Caco-2 (cell line): ENCODE measurements at regions of chr15 and their contacts with region 1.

Region 1: GRCh38 chr15:41465822-41466421 is 27.8 kb upstream of the ITPKA start:
- DNase-seq: peak in 1 of 2 experiments; percentile 57
- H3K4me3 ChIP-seq: no peak overlapping the region
- H3K4me3 Mint-ChIP-seq: no peak overlapping the region
- H3K27ac Mint-ChIP-seq: no peak overlapping the region
- H3K4me1 ChIP-seq: no peaks in the 10 kb centered on the region
- H3K4me1 Mint-ChIP-seq: no peaks in the 10 kb centered on the region
- H3K27me3 ChIP-seq: no peaks in the 10 kb centered on the region
- H3K27me3 Mint-ChIP-seq: no peaks in the 10 kb centered on the region
- CTCF ChIP-seq: peak; percentile 90 to 97

Region 2: GRCh38 chr15:41493205-41493901 is 27.4 kb after region 1 on chr15 and contains the start of gene ITPKA:
- CTCF ChIA-PET with region 1: interaction called, 13 read pairs
- POLR2A ChIA-PET with region 1: interaction called, 6 read pairs
- intact Hi-C with region 1: loop called (anchors 1 kb)
- DNase-seq: peak; percentile 90 to 92
- H3K4me3 ChIP-seq: peak within 1 kb of the TSS; percentile 81
- H3K4me3 Mint-ChIP-seq: peak within 1 kb of the TSS; percentile 95
- H3K27ac Mint-ChIP-seq: peak within 1 kb of the TSS; percentile 4
- H3K4me1 ChIP-seq: peaks cover 18% of the 10 kb centered on the region
- H3K4me1 Mint-ChIP-seq: peaks cover 14% of the 10 kb centered on the region
- H3K27me3 ChIP-seq: no peaks in the 10 kb centered on the region
- H3K27me3 Mint-ChIP-seq: no peaks in the 10 kb centered on the region
- CTCF ChIP-seq: no peak
- total RNA-seq, gene ITPKA: 16.2 and 18.1 TPM in 2 replicates

Region 3: DNA sequence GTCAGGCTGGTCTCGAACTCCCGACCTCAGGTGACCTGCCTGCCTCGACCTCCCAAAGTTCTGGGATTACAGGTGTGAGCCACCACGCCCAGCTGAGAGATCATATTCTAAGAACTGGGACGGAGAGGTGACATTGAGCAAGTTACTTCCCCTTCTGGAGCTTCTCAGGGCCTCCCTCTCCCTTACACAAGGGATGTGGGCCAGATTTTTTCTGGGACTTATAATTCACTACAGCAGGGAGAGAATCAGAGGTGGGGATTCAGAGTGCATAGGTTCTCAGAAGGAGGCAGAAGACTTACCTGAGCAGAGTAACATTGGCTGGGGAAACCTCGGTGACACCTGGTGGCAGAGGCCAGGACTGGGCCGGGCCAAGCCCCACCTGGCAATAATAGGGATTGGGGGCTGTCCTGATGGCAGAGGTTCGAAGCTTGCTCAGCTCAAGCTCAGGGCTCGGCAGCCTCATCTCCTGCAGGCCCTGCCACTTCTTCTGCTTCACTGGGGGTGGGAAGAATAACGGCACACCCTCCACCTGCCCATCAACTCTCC is 40.9 kb after region 1 on chr15:
- CTCF ChIA-PET with region 1: interaction called, 22 read pairs
- POLR2A ChIA-PET with region 1: interaction called, 3 read pairs
- intact Hi-C with region 1: loop called (anchors 1 kb)
- DNase-seq: peak; percentile 65 to 68
- H3K4me3 ChIP-seq: no peak overlapping the region
- H3K4me3 Mint-ChIP-seq: no peak overlapping the region
- H3K27ac Mint-ChIP-seq: no peak overlapping the region
- H3K4me1 ChIP-seq: no peaks in the 10 kb centered on the region
- H3K4me1 Mint-ChIP-seq: no peaks in the 10 kb centered on the region
- H3K27me3 ChIP-seq: no peaks in the 10 kb centered on the region
- H3K27me3 Mint-ChIP-seq: no peaks in the 10 kb centered on the region
- CTCF ChIP-seq: peak; percentile 49 to 71

Region 4: DNA sequence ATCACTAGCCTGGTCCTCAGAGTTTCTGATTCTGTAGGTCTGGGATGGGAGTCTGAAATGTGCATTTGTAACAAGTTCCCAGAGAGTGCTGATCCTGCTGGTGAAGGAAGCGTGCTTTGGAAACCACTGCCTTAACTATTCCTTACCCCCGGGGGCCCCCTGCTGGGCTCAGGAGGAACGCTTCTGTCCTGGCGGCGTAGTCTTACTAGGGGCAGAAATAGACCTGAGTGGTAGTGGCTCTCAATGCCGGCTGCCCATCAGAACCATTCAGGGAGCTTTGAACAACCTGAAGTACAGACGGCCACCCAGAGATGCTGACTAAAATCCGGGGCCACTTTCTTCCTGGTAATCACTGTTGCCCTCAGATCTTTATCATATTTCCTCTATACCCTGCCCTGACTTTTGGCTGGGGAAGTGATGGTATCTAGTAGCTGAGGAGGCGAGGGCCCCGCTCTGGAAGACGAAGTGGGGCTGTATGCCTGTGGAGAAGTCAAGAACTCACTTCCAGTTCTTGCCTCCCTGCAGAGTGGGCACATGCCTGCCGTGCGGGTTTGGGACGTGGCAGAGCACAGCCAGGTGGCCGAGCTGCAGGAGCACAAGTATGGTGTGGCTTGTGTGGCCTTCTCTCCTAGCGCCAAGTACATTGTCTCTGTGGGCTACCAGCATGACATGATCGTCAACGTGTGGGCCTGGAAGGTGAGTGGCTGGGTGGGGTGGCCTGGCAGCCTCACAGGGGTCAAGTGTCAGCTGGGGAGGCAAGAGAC is 345.7 kb after region 1 on chr15:
- CTCF ChIA-PET with region 1: interaction called, 4 read pairs
- POLR2A ChIA-PET with region 1: no interaction called
- intact Hi-C with region 1: loop called (anchors 5 kb)
- DNase-seq: peak; percentile 79 to 86
- H3K4me3 ChIP-seq: no peak overlapping the region
- H3K4me3 Mint-ChIP-seq: no peak overlapping the region
- H3K27ac Mint-ChIP-seq: no peak overlapping the region
- H3K4me1 ChIP-seq: no peaks in the 10 kb centered on the region
- H3K4me1 Mint-ChIP-seq: no peaks in the 10 kb centered on the region
- H3K27me3 ChIP-seq: no peaks in the 10 kb centered on the region
- H3K27me3 Mint-ChIP-seq: no peaks in the 10 kb centered on the region
- CTCF ChIP-seq: peak; percentile 87 to 90